ENCODE measurements at regions of chr20 and their contacts with region 1.

Region 1: GRCh38 chr20:36439040-36439730 is 102.1 kb upstream of the MYL9 start:
- DNase-seq: peak; percentile 54
- H3K4me3 Mint-ChIP-seq: no peak overlapping the region
- H3K27ac Mint-ChIP-seq: no peak overlapping the region
- H3K4me1 Mint-ChIP-seq: peaks cover 4% of the 10 kb centered on the region
- H3K27me3 Mint-ChIP-seq: peaks cover 10% of the 10 kb centered on the region

Region 2: DNA sequence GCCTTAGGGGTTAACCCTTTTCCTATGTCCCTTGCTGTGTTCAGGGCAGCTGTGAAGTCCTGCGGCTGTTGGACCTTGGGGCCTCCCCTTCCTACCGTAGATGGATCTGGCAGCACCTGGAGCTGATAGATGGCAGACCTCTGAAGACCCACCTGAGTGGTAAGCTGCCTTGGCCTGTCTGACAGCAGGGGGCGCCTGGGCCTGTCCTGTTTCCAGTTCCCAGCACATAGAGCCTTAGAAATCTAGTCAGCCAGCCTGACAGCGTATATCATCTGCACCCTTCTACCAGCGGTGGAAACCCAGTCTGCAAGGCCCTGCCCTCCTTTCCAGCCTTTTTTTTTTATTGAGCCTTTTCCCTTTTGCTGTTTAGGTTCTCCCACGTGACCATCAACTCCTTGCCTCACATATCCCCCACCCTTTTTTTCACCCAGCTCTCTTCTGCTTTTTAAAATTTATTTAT is 444.2 kb before region 1 on chr20:
- intact Hi-C with region 1: loop called (anchors 1 kb)
- DNase-seq: peak; percentile 43
- H3K4me3 Mint-ChIP-seq: no peak overlapping the region
- H3K27ac Mint-ChIP-seq: no peak overlapping the region
- H3K4me1 Mint-ChIP-seq: no peaks in the 10 kb centered on the region
- H3K27me3 Mint-ChIP-seq: peaks cover 12% of the 10 kb centered on the region

Region 3: GRCh38 chr20:36155991-36156390 is 283.2 kb before region 1 on chr20:
- intact Hi-C with region 1: loop called (anchors 1 kb)
- DNase-seq: no peak
- H3K4me3 Mint-ChIP-seq: no peak overlapping the region
- H3K27ac Mint-ChIP-seq: no peak overlapping the region
- H3K4me1 Mint-ChIP-seq: no peaks in the 10 kb centered on the region
- H3K27me3 Mint-ChIP-seq: peaks cover 29% of the 10 kb centered on the region

Region 4: GRCh38 chr20:36199345-36200257 is 239.6 kb before region 1 on chr20:
- intact Hi-C with region 1: loop called (anchors 1 kb)
- DNase-seq: peak; percentile 49
- H3K4me3 Mint-ChIP-seq: no peak overlapping the region
- H3K27ac Mint-ChIP-seq: no peak overlapping the region
- H3K4me1 Mint-ChIP-seq: peaks cover 5% of the 10 kb centered on the region
- H3K27me3 Mint-ChIP-seq: peaks cover 4% of the 10 kb centered on the region

Region 5: GRCh38 chr20:36214684-36215256 is 224.4 kb before region 1 on chr20:
- intact Hi-C with region 1: loop called (anchors 1 kb)
- DNase-seq: no peak
- H3K4me3 Mint-ChIP-seq: no peak overlapping the region
- H3K27ac Mint-ChIP-seq: no peak overlapping the region
- H3K4me1 Mint-ChIP-seq: no peaks in the 10 kb centered on the region
- H3K27me3 Mint-ChIP-seq: peaks cover 5% of the 10 kb centered on the region

Region 6: DNA sequence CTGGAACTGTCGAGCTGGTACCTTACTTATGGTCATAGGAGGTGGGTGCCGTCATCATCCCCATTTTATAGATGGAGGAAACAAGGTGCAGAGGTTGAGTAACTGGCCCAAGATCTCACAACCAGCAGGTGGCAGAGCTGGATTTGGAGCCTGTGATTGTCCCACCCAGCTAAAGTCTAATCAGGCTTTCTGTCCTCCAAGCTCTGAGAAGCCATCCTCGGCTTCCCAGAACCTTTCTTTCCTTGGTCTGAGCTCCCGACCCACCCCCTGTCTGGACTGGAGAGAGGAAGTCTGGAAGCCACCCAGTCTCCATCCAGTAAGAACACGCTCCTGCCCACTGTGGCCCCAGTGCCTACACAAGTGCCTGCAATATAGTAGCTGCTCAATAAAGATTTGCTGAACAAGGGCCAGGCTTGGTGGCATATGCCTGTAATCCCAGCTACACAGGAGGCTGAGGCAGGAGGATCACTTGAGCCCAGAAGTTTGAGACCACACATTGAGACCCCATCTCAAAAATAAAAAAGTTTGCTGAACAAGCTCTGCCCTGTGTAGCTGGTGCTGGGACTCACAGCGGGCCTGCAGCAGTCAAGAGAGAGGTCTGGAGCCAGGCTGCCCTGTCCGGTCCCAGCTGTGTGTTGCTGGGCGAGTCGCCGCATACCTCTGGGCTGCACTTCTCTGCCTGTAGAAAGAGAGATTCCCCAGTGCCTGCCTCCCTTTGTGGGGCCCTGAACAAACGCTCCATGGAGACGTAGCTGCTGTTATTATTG is 165.6 kb before region 1 on chr20:
- intact Hi-C with region 1: loop called (anchors 1 kb)
- DNase-seq: no peak
- H3K4me3 Mint-ChIP-seq: no peak overlapping the region
- H3K27ac Mint-ChIP-seq: no peak overlapping the region
- H3K4me1 Mint-ChIP-seq: no peaks in the 10 kb centered on the region
- H3K27me3 Mint-ChIP-seq: peaks cover 9% of the 10 kb centered on the region

Measured in activated T-helper 1 cell treated with anti-CD3 and anti-CD28 coated beads, Interleukin-12 subunit alpha, Interleukin-12 subunit beta, Interleukin-2, Interleukin-4 antibody, amounts not matched to agents 30 ng/mL and 10 ng/mL and 1 ng/mL, durations not matched to agents 14 hours and 24 hours and 36 hours (primary cell).